Heart left ventricle (tissue), 16 donors: ENCODE measurements at regions of chr2 and their contacts with region 1.

Region 1: DNA sequence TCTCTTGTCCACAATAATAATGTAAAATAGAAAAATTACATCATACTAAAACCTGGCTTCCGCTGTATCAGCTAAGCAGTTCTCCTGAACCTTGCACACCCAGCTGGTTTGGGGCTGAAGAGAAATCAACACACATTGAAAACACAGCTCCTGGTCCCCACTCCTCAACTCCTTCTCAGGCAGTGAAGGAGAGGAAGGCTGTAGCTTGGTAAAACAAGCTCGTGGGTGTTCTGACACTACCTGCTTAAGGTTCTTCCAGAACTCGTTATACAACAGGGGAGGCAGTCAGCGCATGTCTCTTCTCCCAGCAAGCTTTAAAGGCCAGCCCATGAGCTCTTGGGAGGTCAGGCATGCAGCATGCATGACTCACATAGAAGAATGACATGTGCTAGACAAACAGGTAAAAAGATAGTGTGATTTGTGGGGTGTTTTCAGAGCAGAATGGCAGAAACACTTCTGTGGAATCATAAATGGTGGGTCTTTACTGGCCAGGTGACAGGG is 69.1 kb downstream of the UXS1 start:
- DNase-seq: no peak
- ATAC-seq: no peak
- H3K4me3 ChIP-seq: no peak overlapping the region
- H3K27ac ChIP-seq: no peak overlapping the region
- H3K4me1 ChIP-seq: no peaks in the 10 kb centered on the region
- H3K27me3 ChIP-seq: no peaks in the 10 kb centered on the region
- CTCF ChIP-seq: no peak
- POLR2A ChIP-seq: no peak

Region 2: DNA sequence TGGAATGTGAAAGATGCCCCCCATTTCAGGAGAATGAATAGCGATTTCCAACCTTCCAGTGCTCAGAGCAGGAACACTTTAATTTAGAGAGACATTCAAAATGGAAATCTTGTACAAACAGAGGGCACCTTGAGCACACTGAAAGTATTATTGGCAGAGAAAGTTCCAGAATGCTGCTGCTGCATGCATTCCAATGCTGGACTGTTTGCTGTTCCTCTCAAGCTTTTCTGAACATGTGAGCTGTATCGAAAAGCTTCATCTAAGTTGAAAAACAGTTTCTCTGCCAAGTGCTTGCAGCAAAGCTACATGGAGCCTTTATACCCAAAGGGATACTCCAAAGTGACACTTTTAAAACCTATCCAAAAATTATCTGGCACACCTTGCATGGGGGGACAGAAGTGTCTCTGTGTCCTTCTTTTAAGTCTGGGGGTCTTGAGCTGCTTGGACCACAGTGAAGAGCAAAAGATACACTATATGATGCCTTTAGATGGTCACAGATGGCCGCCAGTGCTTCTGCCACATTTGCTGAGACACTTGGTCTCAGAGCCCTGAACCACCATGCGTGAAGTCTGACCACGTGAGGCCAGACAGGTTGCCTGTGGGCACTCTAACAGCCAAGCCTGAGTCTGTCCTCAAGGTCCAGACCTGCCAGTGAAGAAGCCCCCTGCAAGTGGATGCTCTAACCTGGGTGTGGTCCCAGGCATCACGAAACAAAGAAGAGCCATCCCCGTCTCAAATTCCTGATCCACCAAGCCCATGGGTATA is 50.3 kb after region 1 on chr2:
- intact Hi-C with region 1: loop called in 1 of 10 experiments (anchors 5 kb)
- DNase-seq: no peak
- ATAC-seq: no peak
- H3K4me3 ChIP-seq: no peak overlapping the region
- H3K27ac ChIP-seq: no peak overlapping the region
- H3K4me1 ChIP-seq: peaks cover 0 to 5% (median 0%) of the 10 kb centered on the region in 12 donors
- H3K27me3 ChIP-seq: no peaks in the 10 kb centered on the region
- CTCF ChIP-seq: no peak
- POLR2A ChIP-seq: no peak